AG04450 (cell line): ENCODE measurements at regions of chr9 and their contacts with region 1.

Region 1: DNA sequence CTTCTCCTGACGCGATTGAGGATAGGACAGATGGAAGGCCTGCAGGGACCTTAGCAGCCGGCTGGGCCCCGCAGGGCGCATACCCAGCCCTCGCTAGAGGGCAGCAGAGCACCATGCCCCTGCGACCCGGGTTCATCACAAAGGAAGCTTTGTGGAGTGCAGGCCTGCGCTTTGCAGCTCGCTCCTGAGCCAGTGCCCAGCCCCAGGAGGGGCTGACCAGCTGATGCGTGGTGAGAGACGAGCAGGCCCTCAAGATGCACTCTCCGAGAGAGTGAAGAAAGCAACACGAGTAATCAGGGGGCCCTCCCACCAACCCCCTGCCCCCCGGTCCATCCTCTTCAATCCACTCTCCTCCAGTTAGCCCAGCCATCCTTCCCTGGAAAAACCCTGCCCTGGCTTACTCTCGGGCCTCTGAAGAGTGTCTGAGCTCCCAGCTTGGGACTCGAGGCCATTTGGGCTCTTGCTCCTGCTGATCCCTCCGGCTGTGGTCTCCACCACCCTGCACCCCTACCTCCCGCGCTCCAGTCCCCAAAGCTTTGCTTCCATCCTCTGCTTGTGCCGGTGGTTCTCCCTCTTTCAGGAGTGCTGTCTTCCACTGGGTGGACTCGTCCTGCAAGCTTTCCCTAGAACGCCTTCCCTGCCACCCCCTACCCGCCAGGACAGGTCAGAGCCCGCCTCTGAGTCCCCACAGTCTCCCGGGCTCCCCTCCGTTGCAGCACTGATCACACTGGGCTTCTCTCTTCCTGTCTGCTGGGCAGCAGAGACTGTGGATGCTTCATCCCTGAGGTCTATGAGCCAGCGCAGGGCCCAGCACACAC is 9.1 kb upstream of the KIF12 start:
- DNase-seq: peak; percentile 57
- H3K4me3 ChIP-seq: no peak overlapping the region
- H3K27ac ChIP-seq: no peak overlapping the region
- H3K27me3 ChIP-seq: peaks cover 19% of the 10 kb centered on the region
- CTCF ChIP-seq: peak; percentile 100

Region 2: GRCh38 chr9:113398796-113399195 is 709.4 kb before region 1 on chr9:
- CTCF ChIA-PET with region 1: no interaction called
- POLR2A ChIA-PET with region 1: no interaction called
- DNase-seq: no peak
- H3K4me3 ChIP-seq: no peak overlapping the region
- H3K27ac ChIP-seq: no peak overlapping the region
- H3K27me3 ChIP-seq: no peaks in the 10 kb centered on the region
- CTCF ChIP-seq: no peak

Region 3: DNA sequence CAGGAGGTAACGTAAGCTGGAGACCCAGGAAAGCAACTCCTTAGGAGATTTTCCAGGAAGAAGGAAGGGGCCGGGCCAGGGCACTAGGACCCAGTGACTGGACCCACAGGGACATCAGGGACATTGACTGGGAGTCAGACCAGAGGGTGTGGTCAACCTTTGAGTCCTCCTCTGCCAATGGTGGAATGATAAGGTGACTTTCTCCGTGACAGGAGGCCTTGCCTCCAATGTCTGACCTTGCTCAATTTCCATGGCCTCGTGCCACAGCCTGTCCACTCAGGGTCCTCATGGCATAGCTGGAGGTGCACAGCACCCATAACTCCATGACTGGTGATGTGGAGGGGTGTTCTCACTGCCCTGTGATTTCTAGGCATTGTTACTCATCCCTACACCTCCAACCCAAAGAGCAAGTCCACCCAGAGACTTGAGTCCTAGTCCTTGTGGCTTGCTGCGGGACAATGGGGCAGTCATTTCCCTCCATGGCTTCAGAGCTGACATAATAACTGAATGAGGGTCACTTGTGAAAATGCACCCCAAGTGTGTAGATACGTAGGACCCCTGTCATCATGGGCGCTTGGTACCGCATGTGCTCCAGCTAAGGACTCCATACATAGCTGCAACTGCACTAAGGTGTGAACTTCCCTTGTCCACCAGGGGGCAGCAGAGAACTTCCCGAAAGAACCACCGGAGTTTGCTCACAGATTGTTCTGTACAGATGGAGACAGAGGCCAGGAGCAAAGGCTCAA is 26.0 kb before region 1 on chr9:
- CTCF ChIA-PET with region 1: interaction called, 82 read pairs
- POLR2A ChIA-PET with region 1: no interaction called
- DNase-seq: peak; percentile 74
- H3K4me3 ChIP-seq: no peak overlapping the region
- H3K27ac ChIP-seq: no peak overlapping the region
- H3K27me3 ChIP-seq: peaks cover 14% of the 10 kb centered on the region
- CTCF ChIP-seq: peak; percentile 93

Region 4: GRCh38 chr9:114155263-114155972 is 47.2 kb after region 1 on chr9 and contains the start of gene COL27A1:
- CTCF ChIA-PET with region 1: interaction called, 40 read pairs
- POLR2A ChIA-PET with region 1: interaction called, 3 read pairs
- DNase-seq: no peak
- H3K4me3 ChIP-seq: peak within 1 kb of the TSS; percentile 76
- H3K27ac ChIP-seq: peak within 1 kb of the TSS; percentile 47
- H3K27me3 ChIP-seq: peaks cover 11% of the 10 kb centered on the region
- CTCF ChIP-seq: peak; percentile 88
- polyA plus RNA-seq, gene COL27A1: 8.5 and 10.0 TPM in 2 replicates

Region 5: DNA sequence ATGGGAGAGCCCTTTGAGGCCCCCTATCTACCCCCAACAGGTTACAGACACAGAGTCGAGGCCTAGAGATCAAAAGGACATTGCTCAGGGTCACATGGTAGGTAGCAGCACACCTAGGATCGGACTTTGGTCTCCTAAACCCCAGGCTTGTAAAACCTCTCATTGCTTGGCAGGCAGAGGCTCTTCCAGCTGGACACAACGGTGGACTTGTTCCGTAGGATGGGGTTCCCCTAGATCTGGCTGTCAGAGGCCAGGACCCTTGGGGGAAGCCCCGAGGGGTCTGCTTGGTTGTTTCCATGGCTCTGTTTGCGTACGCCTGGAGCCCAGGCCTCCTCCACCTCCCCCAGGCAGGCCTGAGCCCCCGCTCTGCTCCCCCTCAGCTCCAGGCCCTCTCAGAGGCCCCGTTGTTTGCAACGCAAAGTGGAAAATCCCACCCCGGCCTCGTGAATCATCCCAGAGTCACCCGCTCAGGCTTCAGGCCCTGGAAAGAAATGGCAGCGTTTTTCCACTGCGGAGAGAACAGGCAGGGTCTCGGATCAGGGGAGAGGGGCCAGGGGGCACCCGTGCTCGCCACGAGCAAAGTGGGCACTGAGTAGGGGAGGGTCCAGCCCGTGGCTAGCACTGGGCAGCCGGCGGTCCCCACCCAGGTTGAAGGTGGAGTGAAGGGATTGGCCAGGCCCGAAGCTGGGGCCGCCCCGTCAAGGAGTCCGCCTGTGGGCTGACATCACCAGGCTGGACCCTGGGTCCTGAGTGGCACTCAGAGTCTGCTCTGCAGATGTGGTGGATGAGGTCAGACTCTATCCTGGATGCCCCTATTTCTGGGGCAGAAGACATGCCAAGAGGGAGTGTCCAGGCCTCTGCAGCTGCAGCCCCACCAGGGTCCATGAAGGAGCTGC is 66.9 kb after region 1 on chr9:
- CTCF ChIA-PET with region 1: no interaction called
- POLR2A ChIA-PET with region 1: no interaction called
- DNase-seq: no peak
- H3K4me3 ChIP-seq: no peak overlapping the region
- H3K27ac ChIP-seq: peak overlapping the region; percentile 94
- H3K27me3 ChIP-seq: no peaks in the 10 kb centered on the region
- CTCF ChIP-seq: no peak

Region 6: GRCh38 chr9:114263853-114264510 is 155.8 kb after region 1 on chr9:
- CTCF ChIA-PET with region 1: interaction called, 32 read pairs
- POLR2A ChIA-PET with region 1: no interaction called
- DNase-seq: no peak
- H3K4me3 ChIP-seq: no peak overlapping the region
- H3K27ac ChIP-seq: no peak overlapping the region
- H3K27me3 ChIP-seq: no peaks in the 10 kb centered on the region
- CTCF ChIP-seq: peak; percentile 51

Region 7: GRCh38 chr9:114321759-114322158 is 213.5 kb after region 1 on chr9:
- CTCF ChIA-PET with region 1: interaction called, 11 read pairs
- POLR2A ChIA-PET with region 1: no interaction called
- DNase-seq: no peak
- H3K4me3 ChIP-seq: no peak overlapping the region
- H3K27ac ChIP-seq: peak overlapping the region; percentile 31
- H3K27me3 ChIP-seq: no peaks in the 10 kb centered on the region
- CTCF ChIP-seq: no peak

Region 8: DNA sequence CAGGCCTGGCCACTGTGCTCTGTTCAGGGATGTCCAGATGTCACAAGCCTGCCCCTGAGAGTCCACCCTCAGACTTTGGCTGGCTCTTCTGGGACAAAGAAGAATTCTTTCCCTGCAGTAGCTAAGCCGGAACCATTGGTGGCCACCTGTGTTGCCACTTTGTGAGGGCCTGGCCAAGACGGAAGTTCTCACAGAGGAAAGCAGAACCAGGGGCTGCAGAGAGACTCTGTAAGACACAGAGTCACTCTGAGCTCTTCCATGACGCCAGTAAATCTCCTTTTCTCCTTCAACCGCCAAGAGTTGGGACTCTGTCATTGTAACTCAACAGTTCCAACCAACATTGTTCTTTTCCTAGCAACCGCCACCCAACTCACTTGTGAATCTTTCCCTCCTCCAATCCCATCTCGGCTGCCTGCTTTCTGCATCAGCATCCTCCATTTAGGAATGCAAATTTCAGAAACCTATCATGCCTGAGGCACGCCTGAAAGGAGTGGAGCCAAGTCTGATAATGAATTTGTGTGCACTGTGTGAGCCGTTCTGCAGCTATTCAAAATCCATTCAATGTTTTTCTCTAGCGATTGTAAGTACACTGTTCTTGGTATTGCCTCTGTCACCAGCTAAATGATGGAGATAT is 441.6 kb after region 1 on chr9:
- CTCF ChIA-PET with region 1: no interaction called
- POLR2A ChIA-PET with region 1: no interaction called
- DNase-seq: peak; percentile 20
- H3K4me3 ChIP-seq: no peak overlapping the region
- H3K27ac ChIP-seq: no peak overlapping the region
- H3K27me3 ChIP-seq: peaks cover 10% of the 10 kb centered on the region
- CTCF ChIP-seq: no peak